ENCODE measurements at regions of chr10 and their contacts with region 1.

Region 1: GRCh38 chr10:101617102-101617823 is 29.1 kb downstream of the DPCD start:
- DNase-seq: no peak
- ATAC-seq: no peak
- H3K4me3 ChIP-seq: no peak overlapping the region
- H3K27ac ChIP-seq: no peak overlapping the region
- H3K4me1 ChIP-seq: no peaks in the 10 kb centered on the region
- H3K27me3 ChIP-seq: no peaks in the 10 kb centered on the region

Region 2: DNA sequence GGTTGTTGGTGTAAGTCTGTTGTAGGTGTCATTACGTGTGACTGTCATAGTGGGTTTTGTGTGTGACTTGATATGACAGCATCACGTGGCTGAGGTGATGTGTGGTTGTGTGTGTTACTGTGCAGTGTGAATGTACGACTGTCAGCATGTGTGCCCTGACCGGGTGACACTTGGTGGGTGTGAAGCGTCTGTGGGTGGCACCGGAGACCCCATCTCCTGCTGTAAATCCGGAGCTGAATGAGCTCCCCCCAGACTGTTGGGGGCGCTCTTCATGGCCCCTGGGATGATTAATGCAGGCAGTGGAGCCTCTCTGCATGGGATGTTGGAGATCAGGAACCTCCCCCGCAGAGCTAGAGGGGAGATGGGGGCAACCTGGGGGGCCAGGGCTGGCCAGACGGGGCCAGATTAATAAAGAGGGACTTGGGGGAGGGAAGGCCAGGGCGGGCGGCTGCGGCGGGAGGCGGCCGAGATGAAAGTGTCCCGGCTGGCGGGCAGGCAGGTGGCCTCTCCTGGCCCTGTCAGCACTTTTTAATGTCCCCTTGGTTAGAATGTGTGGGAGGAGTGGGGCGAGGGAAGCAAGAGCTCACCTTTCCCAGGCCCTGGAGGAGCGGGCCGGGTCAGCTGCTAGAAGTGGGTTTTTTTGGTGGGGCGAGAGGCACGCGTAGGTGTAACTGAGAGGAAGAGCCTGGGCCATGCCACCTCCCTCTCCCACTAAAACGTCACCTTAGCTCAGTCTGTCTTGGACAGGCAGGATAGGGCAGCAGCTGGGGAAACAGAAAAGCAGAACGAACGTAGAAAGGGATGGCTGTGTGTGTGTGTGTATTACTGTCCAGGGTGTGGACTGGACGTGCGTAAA is 1047.4 kb before region 1 on chr10:
- intact Hi-C with region 1: no loop called
- DNase-seq: no peak
- ATAC-seq: no peak
- H3K4me3 ChIP-seq: no peak overlapping the region
- H3K27ac ChIP-seq: no peak overlapping the region
- H3K4me1 ChIP-seq: no peaks in the 10 kb centered on the region
- H3K27me3 ChIP-seq: no peaks in the 10 kb centered on the region

Region 3: DNA sequence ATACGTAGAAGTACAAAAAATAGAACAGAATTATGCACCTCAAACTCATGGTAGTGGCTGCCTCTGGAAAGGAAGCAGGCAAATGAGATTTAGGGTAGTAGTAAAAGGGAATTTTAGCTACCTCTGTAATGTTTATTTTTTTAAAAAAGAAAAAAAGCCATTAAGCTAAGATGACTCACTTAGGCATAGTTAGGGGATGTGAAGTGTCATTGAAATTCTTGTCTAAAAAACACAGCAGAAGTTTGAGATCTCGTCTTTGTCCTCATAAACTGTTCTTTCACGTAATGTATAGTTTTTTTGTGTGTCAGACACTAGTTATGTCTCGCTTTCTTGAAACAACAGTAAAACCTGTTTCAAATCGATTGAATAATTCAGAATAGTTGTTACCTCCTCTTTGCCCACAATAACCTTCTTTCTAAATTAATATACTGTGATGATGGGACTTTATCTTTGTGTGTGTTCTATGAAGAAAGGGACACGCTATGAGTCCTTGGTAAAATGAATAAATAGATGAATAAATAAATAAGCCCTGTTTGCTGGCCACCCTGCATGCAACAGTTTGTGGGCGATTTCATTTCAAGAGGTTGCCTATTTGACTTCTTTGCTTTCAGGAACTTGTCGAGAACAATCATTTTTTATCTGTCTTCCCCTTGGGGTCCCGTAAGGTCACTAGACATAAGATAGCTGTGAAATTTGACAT is 92.2 kb after region 1 on chr10:
- intact Hi-C with region 1: loop called in 1 of 4 experiments (anchors 10 kb)
- DNase-seq: no peak
- ATAC-seq: no peak
- H3K4me3 ChIP-seq: no peak overlapping the region
- H3K27ac ChIP-seq: no peak overlapping the region
- H3K4me1 ChIP-seq: no peaks in the 10 kb centered on the region
- H3K27me3 ChIP-seq: no peaks in the 10 kb centered on the region